AG04450 (cell line): ENCODE measurements at regions of chr2 and their contacts with region 1.

Region 1: DNA sequence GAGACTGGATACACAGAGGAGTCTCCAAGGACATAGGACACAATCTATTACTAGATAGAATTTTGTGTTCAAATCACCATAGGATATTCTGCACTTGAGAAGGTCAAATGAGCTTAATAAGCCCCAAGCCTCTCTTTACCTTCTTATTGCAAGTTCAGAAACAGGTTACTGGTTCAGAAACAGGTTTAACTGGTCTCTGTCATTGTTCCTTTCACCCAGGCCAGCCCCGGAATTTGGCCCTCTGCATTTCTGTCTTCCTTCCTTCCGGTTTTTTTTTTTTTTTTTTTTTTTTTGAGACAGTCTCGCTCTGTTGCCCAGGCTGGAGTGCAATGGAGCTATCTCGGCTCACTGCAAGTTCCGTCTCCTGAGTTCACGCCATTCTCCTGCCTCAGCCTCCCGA is 700.2 kb downstream of the EPHA4 start:
- DNase-seq: no peak
- H3K4me3 ChIP-seq: no peak overlapping the region
- H3K27ac ChIP-seq: no peak overlapping the region
- H3K27me3 ChIP-seq: no peaks in the 10 kb centered on the region
- CTCF ChIP-seq: no peak

Region 2: DNA sequence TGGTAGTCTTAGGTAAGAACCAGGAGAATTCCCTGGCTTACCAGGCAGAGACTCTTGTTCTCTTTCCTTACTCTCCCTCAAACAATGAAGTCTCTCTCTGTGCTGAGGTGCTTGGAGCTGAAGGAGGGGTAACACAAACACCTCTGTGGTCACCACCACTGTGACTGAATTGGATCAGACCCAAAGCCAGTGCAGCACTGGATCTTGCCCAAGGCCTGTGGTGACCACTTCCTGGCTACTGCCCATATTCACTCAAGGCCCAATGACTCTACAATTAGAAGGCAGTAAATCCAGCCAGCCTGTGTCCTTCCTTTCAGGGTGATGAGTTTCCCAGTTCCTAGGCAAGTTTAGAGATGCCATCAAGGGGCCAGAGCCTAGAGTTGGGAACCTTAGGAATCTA is 537.7 kb before region 1 on chr2:
- CTCF ChIA-PET with region 1: no interaction called
- POLR2A ChIA-PET with region 1: interaction called, 14 read pairs
- DNase-seq: no peak
- H3K4me3 ChIP-seq: no peak overlapping the region
- H3K27ac ChIP-seq: no peak overlapping the region
- H3K27me3 ChIP-seq: no peaks in the 10 kb centered on the region
- CTCF ChIP-seq: no peak

Region 3: GRCh38 chr2:220469201-220469600 is 402.7 kb before region 1 on chr2:
- CTCF ChIA-PET with region 1: no interaction called
- POLR2A ChIA-PET with region 1: no interaction called
- DNase-seq: peak; percentile 36
- H3K4me3 ChIP-seq: no peak overlapping the region
- H3K27ac ChIP-seq: no peak overlapping the region
- H3K27me3 ChIP-seq: no peaks in the 10 kb centered on the region
- CTCF ChIP-seq: no peak

Region 4: DNA sequence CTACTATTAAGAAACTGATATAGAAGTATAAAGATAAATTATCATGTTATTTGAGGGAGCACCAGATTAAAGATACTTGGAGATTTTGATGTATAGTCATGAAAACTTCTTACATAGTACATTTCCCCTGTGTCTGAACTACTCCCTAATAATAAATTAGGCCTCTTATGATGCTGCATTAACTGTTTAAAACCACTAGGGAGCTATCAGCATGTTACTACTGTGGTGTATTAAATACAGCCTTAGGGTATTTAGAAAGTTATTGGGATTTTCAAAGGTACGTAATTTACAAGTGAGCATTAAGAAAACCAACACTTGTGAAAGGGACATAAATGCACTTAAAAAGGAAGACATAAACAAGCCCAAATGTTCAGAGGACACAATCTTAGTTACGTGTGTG is 13.8 kb before region 1 on chr2:
- CTCF ChIA-PET with region 1: no interaction called
- POLR2A ChIA-PET with region 1: no interaction called
- DNase-seq: no peak
- H3K4me3 ChIP-seq: no peak overlapping the region
- H3K27ac ChIP-seq: no peak overlapping the region
- H3K27me3 ChIP-seq: no peaks in the 10 kb centered on the region
- CTCF ChIP-seq: no peak